Endothelial cell of umbilical vein (primary cell): ENCODE measurements at regions of chr15 and their contacts with region 1.

Region 1: DNA sequence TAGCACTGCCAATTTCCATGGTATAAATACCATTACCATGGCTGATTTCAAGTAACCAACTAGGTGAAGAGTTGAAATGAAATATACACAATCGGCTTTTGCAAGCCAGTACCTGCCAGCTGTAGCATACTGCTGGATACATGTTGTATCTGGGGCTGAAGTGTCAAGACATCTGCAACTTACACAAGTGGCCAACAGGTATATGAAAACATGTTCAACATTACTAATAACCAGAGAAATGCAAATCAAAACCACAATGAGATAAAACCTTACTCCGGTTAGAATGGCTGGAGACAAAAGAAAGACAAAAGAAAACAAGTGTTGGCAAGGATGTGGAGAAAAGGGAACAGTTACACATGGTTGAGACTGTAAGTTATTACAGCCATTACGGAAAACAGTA is 11.6 kb downstream of the ATOSA start:
- DNase-seq: no peak
- H3K4me3 ChIP-seq: no peak overlapping the region
- H3K27ac ChIP-seq: no peak overlapping the region
- H3K4me1 ChIP-seq: no peaks in the 10 kb centered on the region
- H3K27me3 ChIP-seq: no peaks in the 10 kb centered on the region
- CTCF ChIP-seq: no peak
- POLR2A ChIP-seq: no peak

Region 2: DNA sequence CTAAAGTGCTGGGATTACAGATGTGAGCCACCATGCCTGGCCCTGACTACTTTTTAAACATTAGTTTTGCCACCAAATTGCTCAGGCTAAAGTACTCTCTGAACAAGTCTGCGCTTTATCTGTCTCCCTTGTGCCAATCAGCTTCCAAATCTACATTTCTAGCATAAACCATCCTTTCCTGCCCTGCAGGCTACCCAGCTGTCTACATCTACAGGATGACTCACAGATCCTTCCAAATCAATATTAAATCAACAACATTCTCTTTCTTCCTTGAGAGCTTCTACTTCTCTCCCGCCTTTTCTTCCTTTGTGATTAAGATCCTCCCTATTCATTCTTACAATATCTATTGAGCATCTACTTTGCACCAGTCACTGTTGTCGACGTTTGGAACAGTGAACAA is 27.6 kb after region 1 on chr15:
- CTCF ChIA-PET with region 1: no interaction called
- POLR2A ChIA-PET with region 1: no interaction called
- dilution Hi-C with region 1: no loop called
- intact Hi-C with region 1: loop called (anchors 1 kb)
- DNase-seq: no peak
- H3K4me3 ChIP-seq: no peak overlapping the region
- H3K27ac ChIP-seq: no peak overlapping the region
- H3K4me1 ChIP-seq: no peaks in the 10 kb centered on the region
- H3K27me3 ChIP-seq: peaks cover 4 to 6% of the 10 kb centered on the region in 2 experiments
- CTCF ChIP-seq: no peak
- POLR2A ChIP-seq: no peak

Region 3: GRCh38 chr15:52714968-52715367 is 47.4 kb after region 1 on chr15:
- CTCF ChIA-PET with region 1: no interaction called
- POLR2A ChIA-PET with region 1: no interaction called
- dilution Hi-C with region 1: no loop called
- intact Hi-C with region 1: no loop called
- DNase-seq: no peak
- H3K4me3 ChIP-seq: no peak overlapping the region
- H3K27ac ChIP-seq: no peak overlapping the region
- H3K4me1 ChIP-seq: no peaks in the 10 kb centered on the region
- H3K27me3 ChIP-seq: peaks cover 0 to 6% of the 10 kb centered on the region in 2 experiments
- CTCF ChIP-seq: no peak
- POLR2A ChIP-seq: no peak